CD8-positive, alpha-beta memory T cell (primary cell): ENCODE measurements at regions of chr12 and their contacts with region 1.

Region 1: DNA sequence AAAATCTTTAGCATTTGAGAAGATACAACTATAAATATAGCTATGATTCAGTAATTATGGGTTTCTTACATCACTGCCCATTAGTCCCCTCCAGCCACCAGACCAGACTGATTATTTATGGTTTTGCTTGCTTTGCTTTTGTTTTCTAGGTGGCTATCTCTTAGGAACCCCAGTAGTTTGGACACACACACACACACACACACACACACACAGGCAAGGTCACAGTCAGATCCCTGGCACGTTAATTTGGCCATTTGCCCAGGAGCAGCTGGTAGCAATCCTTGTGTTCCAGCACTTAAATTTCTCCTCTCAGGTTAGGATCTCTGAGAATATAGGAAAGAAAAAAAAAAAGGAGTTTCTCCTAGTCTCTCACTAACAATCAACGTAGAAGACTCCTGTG is 90.2 kb upstream of the RESF1 start:
- DNase-seq: no peak
- H3K4me3 ChIP-seq: no peak overlapping the region
- H3K4me3 Mint-ChIP-seq: no peak overlapping the region
- H3K27ac ChIP-seq: no peak overlapping the region
- H3K27ac Mint-ChIP-seq: peak overlapping the region in 1 of 8 donors; percentile 29
- H3K4me1 ChIP-seq: no peaks in the 10 kb centered on the region
- H3K4me1 Mint-ChIP-seq: peaks cover 17 to 20% (median 18%) of the 10 kb centered on the region in 3 donors
- H3K27me3 ChIP-seq: no peaks in the 10 kb centered on the region
- H3K27me3 Mint-ChIP-seq: no peaks in the 10 kb centered on the region

Region 2: DNA sequence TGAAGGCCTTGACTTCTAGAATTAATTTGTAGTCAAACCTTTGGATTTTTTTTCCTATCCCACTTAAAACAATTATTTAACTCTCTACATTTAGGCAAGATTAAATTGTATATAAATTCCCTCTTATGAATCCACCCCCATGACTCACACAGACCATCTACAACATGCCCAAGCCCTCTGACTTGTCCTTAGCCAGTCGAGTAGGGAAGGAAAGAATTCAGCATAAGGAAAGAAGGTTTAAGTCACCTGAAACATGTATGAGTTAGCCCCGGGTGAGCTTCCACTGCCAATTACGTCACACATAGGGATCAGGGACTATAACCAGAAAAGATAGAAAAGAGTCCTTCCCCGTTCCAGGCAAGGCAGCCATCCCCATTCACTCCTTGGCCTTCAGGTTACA is 75.3 kb after region 1 on chr12:
- CTCF ChIA-PET with region 1: no interaction called
- POLR2A ChIA-PET with region 1: no interaction called
- DNase-seq: no peak
- H3K4me3 ChIP-seq: no peak overlapping the region
- H3K4me3 Mint-ChIP-seq: no peak overlapping the region
- H3K27ac ChIP-seq: no peak overlapping the region
- H3K27ac Mint-ChIP-seq: no peak overlapping the region
- H3K4me1 ChIP-seq: no peaks in the 10 kb centered on the region
- H3K4me1 Mint-ChIP-seq: peaks cover under 1 to 8% (median 4%) of the 10 kb centered on the region in 3 donors
- H3K27me3 ChIP-seq: no peaks in the 10 kb centered on the region
- H3K27me3 Mint-ChIP-seq: no peaks in the 10 kb centered on the region

Region 3: DNA sequence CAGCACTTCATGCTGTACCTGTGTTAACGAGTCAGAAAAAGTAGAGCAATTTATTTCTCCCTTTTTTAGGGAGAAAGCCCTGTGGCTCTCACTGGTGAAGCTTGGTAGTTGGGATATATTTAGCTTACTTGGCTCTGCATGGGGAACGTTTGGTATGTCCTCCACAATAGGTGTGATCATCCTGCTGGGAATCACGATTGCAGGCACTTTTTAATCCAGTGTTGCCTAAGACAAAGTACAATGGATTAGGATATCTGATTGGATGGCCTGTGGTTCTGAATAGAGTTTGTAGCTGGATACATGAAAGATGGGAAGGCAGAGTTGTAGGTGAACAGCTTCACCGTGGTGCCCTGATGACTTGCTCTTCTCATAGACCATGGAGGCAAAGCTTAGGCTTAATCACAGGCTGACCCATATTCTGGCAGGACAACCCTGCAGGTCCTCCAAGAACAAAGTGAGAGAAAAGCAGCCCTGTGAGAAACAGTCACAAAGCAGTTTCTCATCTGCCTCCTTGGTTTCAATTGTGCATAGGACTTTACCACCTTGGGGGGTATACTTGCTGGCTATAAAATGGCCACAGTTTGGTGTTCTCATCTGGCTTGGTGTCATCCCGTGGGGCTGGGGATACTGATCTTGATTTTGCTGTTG is 97.7 kb after region 1 on chr12:
- CTCF ChIA-PET with region 1: no interaction called
- POLR2A ChIA-PET with region 1: interaction called, 10 read pairs
- DNase-seq: peak in 1 of 5 donors; percentile 8
- H3K4me3 ChIP-seq: peak overlapping the region; percentile 30
- H3K4me3 Mint-ChIP-seq: peak overlapping the region; percentile 85 to 100 (median 96)
- H3K27ac ChIP-seq: peak overlapping the region; percentile 19
- H3K27ac Mint-ChIP-seq: peak overlapping the region; percentile 90 to 98 (median 96)
- H3K4me1 ChIP-seq: peaks cover 87% of the 10 kb centered on the region
- H3K4me1 Mint-ChIP-seq: peaks cover 79 to 99% (median 99%) of the 10 kb centered on the region in 3 donors
- H3K27me3 ChIP-seq: no peaks in the 10 kb centered on the region
- H3K27me3 Mint-ChIP-seq: no peaks in the 10 kb centered on the region